Sciatic nerve (tissue), 2 donors: ENCODE measurements at regions of chr5 and their contacts with region 1.

Region 1: GRCh38 chr5:23332650-23333251 is 174.7 kb upstream of the PRDM9 start:
- DNase-seq: no peak
- ATAC-seq: no peak

Region 2: GRCh38 chr5:24331531-24331930 is 998.8 kb after region 1 on chr5:
- intact Hi-C with region 1: loop called (anchors 5 kb)
- DNase-seq: no peak
- ATAC-seq: no peak